ENCODE measurements at regions of chr1 and their contacts with region 1.

Region 1: GRCh38 chr1:192559115-192560006 is 16.2 kb upstream of the RGS1 start:
- DNase-seq: no peak
- ATAC-seq: peak; percentile 54
- H3K4me3 ChIP-seq: peak overlapping the region; percentile 23; the same call in 1 of the 2 replicates
- H3K27ac ChIP-seq: peak overlapping the region; percentile 79
- H3K4me1 ChIP-seq: peaks cover 3% of the 10 kb centered on the region; the same call in 1 of the 2 replicates
- H3K27me3 ChIP-seq: no peaks in the 10 kb centered on the region
- CTCF ChIP-seq: no peak
- EP300 ChIP-seq: peak; percentile 93 to 99
- POLR2A ChIP-seq: no peak
- RAD21 ChIP-seq: peak; percentile 14; the same call in 1 of the 2 replicates

Region 2: DNA sequence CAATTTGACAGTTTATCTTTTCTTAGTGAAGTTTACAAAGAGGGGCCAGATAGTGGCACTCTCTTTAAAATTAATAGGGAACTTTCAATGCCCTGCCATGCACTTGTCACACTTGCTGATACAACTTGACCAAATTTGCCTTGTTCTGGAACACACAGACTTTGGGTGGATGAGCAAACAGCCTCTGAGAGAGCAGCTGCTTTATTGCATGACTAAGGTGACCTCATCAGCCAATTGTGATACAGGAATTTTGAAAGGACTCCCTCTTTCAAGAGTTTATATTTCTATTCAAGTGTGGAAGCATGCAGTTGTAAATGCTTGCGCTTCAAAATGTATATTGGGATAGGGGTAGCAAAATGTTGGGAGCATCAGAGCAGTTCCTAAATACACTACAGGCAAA is 14.1 kb after region 1 on chr1:
- CTCF ChIA-PET with region 1: interaction called, 11 read pairs
- POLR2A ChIA-PET with region 1: interaction called, 34 read pairs
- RAD21 ChIA-PET with region 1: interaction called, 38 read pairs
- SMC1A ChIA-PET with region 1: interaction called, 58 read pairs
- in situ Hi-C with region 1: no loop called
- intact Hi-C with region 1: loop called (anchors 1 kb)
- DNase-seq: no peak
- ATAC-seq: no peak
- H3K4me3 ChIP-seq: no peak overlapping the region
- H3K27ac ChIP-seq: no peak overlapping the region
- H3K4me1 ChIP-seq: peaks cover 3% of the 10 kb centered on the region; the same call in 1 of the 2 replicates
- H3K27me3 ChIP-seq: no peaks in the 10 kb centered on the region
- CTCF ChIP-seq: no peak
- EP300 ChIP-seq: no peak
- POLR2A ChIP-seq: no peak
- RAD21 ChIP-seq: no peak